T-cell (primary cell): ENCODE measurements at regions of chr16 and their contacts with region 1.

Region 1: GRCh38 chr16:50326949-50327402 is 41.8 kb downstream of the BRD7 start:
- DNase-seq: peak; percentile 36 to 87 (median 70)
- ATAC-seq: peak; percentile 82 to 94 (median 87)
- H3K4me3 ChIP-seq: no peak overlapping the region
- H3K4me3 Mint-ChIP-seq: no peak overlapping the region
- H3K27ac ChIP-seq: peak overlapping the region; percentile 75
- H3K27ac Mint-ChIP-seq: peak overlapping the region; percentile 85 to 88
- H3K4me1 ChIP-seq: peaks cover 5 to 18% of the 10 kb centered on the region in 2 experiments
- H3K4me1 Mint-ChIP-seq: peaks cover 43 to 63% (median 62%) of the 10 kb centered on the region in 3 donors
- H3K27me3 ChIP-seq: no peaks in the 10 kb centered on the region
- H3K27me3 Mint-ChIP-seq: no peaks in the 10 kb centered on the region

Region 2: GRCh38 chr16:50276801-50277555 is 50.0 kb before region 1 on chr16:
- CTCF ChIA-PET with region 1: interaction called, 3 to 11 read pairs
- POLR2A ChIA-PET with region 1: interaction called in 1 of 2 experiments, 4 read pairs
- DNase-seq: no peak
- ATAC-seq: no peak
- H3K4me3 ChIP-seq: no peak overlapping the region
- H3K4me3 Mint-ChIP-seq: peak overlapping the region; percentile 18 to 85 (median 42)
- H3K27ac ChIP-seq: peak overlapping the region; percentile 93
- H3K27ac Mint-ChIP-seq: peak overlapping the region; percentile 87 to 99
- H3K4me1 ChIP-seq: peaks cover 65 to 94% of the 10 kb centered on the region in 2 experiments
- H3K4me1 Mint-ChIP-seq: peaks cover 89 to 99% (median 98%) of the 10 kb centered on the region in 3 donors
- H3K27me3 ChIP-seq: no peaks in the 10 kb centered on the region
- H3K27me3 Mint-ChIP-seq: no peaks in the 10 kb centered on the region

Region 3: GRCh38 chr16:50305441-50306061 is 21.4 kb before region 1 on chr16:
- CTCF ChIA-PET with region 1: no interaction called
- POLR2A ChIA-PET with region 1: no interaction called
- DNase-seq: peak in 1 of 35 experiments; percentile 17
- ATAC-seq: no peak
- H3K4me3 ChIP-seq: no peak overlapping the region
- H3K4me3 Mint-ChIP-seq: no peak overlapping the region
- H3K27ac ChIP-seq: no peak overlapping the region
- H3K27ac Mint-ChIP-seq: no peak overlapping the region
- H3K4me1 ChIP-seq: peaks cover 0 to 3% of the 10 kb centered on the region in 2 experiments
- H3K4me1 Mint-ChIP-seq: peaks cover 5 to 9% (median 6%) of the 10 kb centered on the region in 3 donors
- H3K27me3 ChIP-seq: no peaks in the 10 kb centered on the region
- H3K27me3 Mint-ChIP-seq: no peaks in the 10 kb centered on the region

Region 4: GRCh38 chr16:50354629-50355456 is 27.9 kb after region 1 on chr16:
- CTCF ChIA-PET with region 1: interaction called, 18 to 250 read pairs
- POLR2A ChIA-PET with region 1: interaction called in 1 of 2 experiments, 18 read pairs
- DNase-seq: peak in 2 of 35 experiments; percentile 34 to 51
- ATAC-seq: no peak
- H3K4me3 ChIP-seq: no peak overlapping the region
- H3K4me3 Mint-ChIP-seq: no peak overlapping the region
- H3K27ac ChIP-seq: no peak overlapping the region
- H3K27ac Mint-ChIP-seq: peak overlapping the region; percentile 0 to 64
- H3K4me1 ChIP-seq: no peaks in the 10 kb centered on the region
- H3K4me1 Mint-ChIP-seq: peaks cover 24 to 54% (median 25%) of the 10 kb centered on the region in 3 donors
- H3K27me3 ChIP-seq: no peaks in the 10 kb centered on the region
- H3K27me3 Mint-ChIP-seq: no peaks in the 10 kb centered on the region

Region 5: GRCh38 chr16:50368410-50369132 is 41.6 kb after region 1 on chr16 and contains the start of gene BRD7:
- CTCF ChIA-PET with region 1: interaction called in 1 of 2 experiments, 11 read pairs
- POLR2A ChIA-PET with region 1: interaction called, 3 to 7 read pairs
- DNase-seq: peak; percentile 45 to 88 (median 67)
- ATAC-seq: peak; percentile 78 to 92 (median 87)
- H3K4me3 ChIP-seq: peak within 1 kb of the TSS; percentile 56 to 86
- H3K4me3 Mint-ChIP-seq: peak within 1 kb of the TSS; percentile 83 to 88 (median 87)
- H3K27ac ChIP-seq: peak within 1 kb of the TSS; percentile 73
- H3K27ac Mint-ChIP-seq: peak within 1 kb of the TSS; percentile 93 to 96
- H3K4me1 ChIP-seq: peaks cover 20 to 21% of the 10 kb centered on the region in 2 experiments
- H3K4me1 Mint-ChIP-seq: peaks cover 51 to 63% (median 54%) of the 10 kb centered on the region in 3 donors
- H3K27me3 ChIP-seq: peaks cover 0 to 1% of the 10 kb centered on the region in 2 experiments
- H3K27me3 Mint-ChIP-seq: no peaks in the 10 kb centered on the region
- total RNA-seq, gene BRD7: 62.9 to 115 (median 75.4) TPM

Region 6: GRCh38 chr16:50747207-50747956 is 420.4 kb after region 1 on chr16:
- CTCF ChIA-PET with region 1: interaction called, 3 to 10 read pairs
- POLR2A ChIA-PET with region 1: no interaction called
- DNase-seq: peak in 13 of 35 experiments; percentile 7 to 77 (median 30)
- ATAC-seq: peak; percentile 74 to 79 (median 77)
- H3K4me3 ChIP-seq: peak overlapping the region; percentile 15 to 37
- H3K4me3 Mint-ChIP-seq: peak overlapping the region; percentile 72 to 98 (median 81)
- H3K27ac ChIP-seq: peak overlapping the region; percentile 100
- H3K27ac Mint-ChIP-seq: peak overlapping the region; percentile 95 to 97
- H3K4me1 ChIP-seq: peaks cover 16 to 62% of the 10 kb centered on the region in 2 experiments
- H3K4me1 Mint-ChIP-seq: peaks cover 71 to 77% (median 76%) of the 10 kb centered on the region in 3 donors
- H3K27me3 ChIP-seq: no peaks in the 10 kb centered on the region
- H3K27me3 Mint-ChIP-seq: no peaks in the 10 kb centered on the region